OCI-LY7 (cell line): ENCODE measurements at regions of chr1 and their contacts with region 1.

Region 1: DNA sequence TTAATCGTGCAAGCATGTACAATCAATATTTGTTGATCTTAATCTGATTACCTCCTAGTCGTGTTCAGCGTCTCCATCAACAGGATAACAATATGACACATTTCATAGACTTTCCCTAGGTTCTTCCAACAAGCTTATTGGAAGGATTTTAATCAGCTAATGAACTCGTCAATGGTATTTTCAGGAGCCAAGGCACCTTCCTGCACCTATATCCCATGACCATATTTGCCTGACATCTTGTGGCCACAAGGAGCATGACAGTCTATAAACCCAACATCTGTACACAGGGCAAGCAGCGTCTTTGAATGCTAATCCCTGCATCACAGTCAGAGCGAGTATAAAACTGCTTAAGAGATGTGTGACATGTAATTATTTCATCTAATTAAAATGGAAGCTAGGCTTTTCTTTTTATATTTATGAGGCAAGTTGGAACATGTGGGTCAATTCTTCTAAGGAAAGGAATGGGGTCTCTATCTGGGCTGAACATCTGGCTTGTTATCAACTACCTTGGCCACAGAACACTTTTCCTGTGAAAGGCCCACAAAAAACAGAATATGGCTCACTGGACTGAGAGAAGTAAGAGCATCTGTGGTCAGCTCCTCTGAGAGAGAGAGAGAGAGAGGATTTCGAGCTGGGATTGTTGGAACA is 388.8 kb downstream of the NTNG1 start:
- DNase-seq: peak; percentile 74
- H3K4me3 ChIP-seq: no peak overlapping the region
- H3K27ac ChIP-seq: no peak overlapping the region
- H3K4me1 ChIP-seq: peaks cover 4% of the 10 kb centered on the region
- CTCF ChIP-seq: peak; percentile 97

Region 2: DNA sequence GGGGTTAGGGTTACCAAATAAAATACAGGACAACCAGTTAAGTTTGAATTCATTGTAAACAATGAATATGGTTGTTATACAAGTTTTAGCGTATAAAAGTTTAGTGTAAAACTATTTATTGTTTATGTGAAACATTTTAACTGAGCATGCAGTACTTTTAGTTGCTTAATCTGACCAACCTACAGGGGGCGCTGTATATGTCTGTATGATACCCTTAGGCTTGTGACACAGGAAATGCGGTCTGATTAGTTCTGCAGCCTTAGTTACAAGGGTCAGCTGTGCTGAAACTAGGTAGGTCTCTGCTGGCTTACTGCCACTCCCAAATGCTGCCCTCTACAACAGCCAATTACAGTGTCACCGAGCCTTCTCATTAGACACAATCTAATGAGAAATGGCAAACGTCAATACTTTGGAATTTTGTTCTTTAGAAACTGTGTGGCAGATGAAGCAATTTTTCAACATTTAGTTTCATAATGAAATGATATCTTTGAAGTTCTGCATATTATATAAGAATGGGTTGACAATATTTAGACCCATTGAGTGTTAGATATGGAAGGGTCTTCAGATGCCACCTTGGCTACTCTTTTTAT is 332.6 kb before region 1 on chr1:
- CTCF ChIA-PET with region 1: no interaction called
- POLR2A ChIA-PET with region 1: no interaction called
- intact Hi-C with region 1: loop called (anchors 1 kb)
- DNase-seq: peak; percentile 84
- H3K4me3 ChIP-seq: no peak overlapping the region
- H3K27ac ChIP-seq: no peak overlapping the region
- H3K4me1 ChIP-seq: peaks cover 4% of the 10 kb centered on the region
- CTCF ChIP-seq: peak; percentile 98

Region 3: DNA sequence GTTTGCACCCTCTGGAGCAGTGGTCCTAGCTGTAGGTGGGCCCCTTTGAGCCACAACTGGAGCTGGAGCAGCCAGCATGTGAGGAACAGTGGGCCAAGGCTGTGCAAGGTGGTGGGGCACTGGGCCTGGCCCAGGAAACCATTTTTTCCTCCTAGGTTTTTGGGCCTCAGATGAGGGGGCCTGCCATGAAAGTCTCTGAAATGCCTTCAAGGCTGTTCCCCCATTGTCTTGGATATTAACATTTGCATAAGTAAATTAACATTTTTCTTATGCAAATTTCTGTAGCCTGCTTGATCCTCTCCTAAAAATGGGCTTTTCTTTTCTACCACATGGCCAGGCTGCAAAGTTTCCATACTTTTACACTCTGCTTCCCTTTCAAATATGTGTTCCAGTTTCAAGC is 176.8 kb before region 1 on chr1:
- CTCF ChIA-PET with region 1: no interaction called
- POLR2A ChIA-PET with region 1: no interaction called
- intact Hi-C with region 1: no loop called
- DNase-seq: no peak
- H3K4me3 ChIP-seq: no peak overlapping the region
- H3K27ac ChIP-seq: no peak overlapping the region
- H3K4me1 ChIP-seq: peaks cover 33% of the 10 kb centered on the region
- CTCF ChIP-seq: no peak

Region 4: DNA sequence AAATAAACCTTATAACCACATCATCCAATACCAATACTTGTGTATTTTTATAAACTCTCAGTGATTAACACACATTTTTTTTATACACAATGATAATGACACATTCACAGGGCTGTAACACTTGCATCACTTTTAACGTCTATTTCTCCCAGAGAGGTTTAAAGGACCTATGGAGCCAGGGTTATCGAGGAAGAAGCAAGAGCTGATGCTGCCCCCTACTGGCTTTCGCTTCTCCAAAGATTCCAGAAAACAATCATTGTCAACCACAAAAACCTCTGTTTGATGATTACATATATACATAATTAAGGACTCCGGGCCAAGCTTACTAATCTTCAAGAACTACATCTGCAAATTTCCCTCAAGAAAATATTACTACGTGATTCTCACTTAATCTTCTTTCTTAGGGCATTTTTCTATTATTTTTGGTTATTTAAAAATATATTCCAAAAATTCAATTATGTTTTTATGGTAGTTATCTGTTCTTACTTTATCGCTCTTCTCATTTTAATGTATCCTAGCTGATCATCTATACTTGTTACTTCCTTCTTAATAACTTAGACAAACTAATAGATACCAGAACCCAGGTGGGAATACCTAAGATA is 220.8 kb after region 1 on chr1:
- CTCF ChIA-PET with region 1: interaction called, 6 read pairs
- POLR2A ChIA-PET with region 1: interaction called, 3 read pairs
- intact Hi-C with region 1: loop called (anchors 1 kb)
- DNase-seq: peak; percentile 78
- H3K4me3 ChIP-seq: no peak overlapping the region
- H3K27ac ChIP-seq: no peak overlapping the region
- H3K4me1 ChIP-seq: peaks cover 7% of the 10 kb centered on the region
- CTCF ChIP-seq: peak; percentile 94